ENCODE measurements at regions of chr6 and their contacts with region 1.

Region 1: DNA sequence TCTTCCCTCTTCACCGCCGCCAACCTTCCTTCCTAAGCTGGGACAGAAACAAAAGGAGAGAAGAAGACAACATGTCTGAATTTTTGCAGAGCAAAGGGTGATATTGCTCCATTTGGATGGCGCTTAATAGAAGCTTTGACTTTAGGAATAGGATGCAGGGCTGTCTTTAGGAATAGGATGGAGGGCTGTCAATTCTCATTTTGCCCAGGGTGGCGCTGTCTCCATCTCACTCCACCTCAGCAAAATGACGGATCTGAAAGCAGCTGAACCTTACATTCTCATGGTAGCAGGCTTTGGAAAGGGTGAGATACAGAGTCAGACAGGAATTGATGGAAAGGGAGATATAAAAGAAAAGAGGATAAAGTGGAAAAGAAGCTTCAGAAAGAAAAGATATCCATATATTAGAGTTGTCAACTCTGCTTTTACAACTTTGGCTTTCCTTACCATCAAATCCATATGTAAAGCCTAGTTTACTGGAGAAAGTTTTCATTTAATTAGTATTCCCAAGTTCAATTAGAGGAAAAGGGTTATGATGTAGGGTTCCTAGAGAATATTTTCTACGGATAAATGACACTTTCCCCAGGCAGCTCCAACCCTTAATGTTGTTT is 2.4 kb downstream of the MTCL3 start:
- DNase-seq: peak; percentile 60
- H3K4me3 Mint-ChIP-seq: peak overlapping the region; percentile 80
- H3K27ac Mint-ChIP-seq: peak overlapping the region; percentile 72
- H3K4me1 Mint-ChIP-seq: peaks cover 47% of the 10 kb centered on the region
- H3K27me3 Mint-ChIP-seq: peaks cover 54% of the 10 kb centered on the region

Region 2: DNA sequence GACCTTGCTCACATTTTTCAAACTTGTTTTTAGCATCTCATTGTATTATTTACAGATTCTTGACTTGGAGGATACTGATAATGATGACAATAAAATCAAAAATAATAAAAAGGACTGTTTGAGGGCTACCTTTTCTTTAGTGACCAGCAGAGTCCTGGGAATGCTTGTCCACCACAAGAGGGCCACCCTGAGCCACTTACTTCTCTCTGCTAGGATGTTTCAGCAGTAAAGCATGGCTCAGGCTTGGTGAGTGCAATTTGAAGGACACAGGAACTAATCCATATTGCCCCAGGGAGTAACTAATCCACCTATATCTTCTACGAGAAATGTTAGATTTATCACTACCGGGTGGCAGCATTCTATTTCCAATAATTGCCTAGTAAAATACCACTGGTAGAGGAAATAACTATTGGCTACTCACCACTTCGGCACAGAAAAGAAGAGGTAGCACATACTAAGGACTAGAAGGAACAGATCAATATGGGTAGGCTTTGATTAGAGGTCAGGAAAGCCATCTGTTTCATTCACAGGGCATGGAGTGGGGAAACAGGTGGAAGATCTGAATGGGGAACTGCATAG is 51.8 kb before region 1 on chr6:
- CTCF ChIA-PET with region 1: interaction called, 31 read pairs
- DNase-seq: peak; percentile 77
- H3K4me3 Mint-ChIP-seq: no peak overlapping the region
- H3K27ac Mint-ChIP-seq: no peak overlapping the region
- H3K4me1 Mint-ChIP-seq: peaks cover 13% of the 10 kb centered on the region
- H3K27me3 Mint-ChIP-seq: no peaks in the 10 kb centered on the region

Region 3: DNA sequence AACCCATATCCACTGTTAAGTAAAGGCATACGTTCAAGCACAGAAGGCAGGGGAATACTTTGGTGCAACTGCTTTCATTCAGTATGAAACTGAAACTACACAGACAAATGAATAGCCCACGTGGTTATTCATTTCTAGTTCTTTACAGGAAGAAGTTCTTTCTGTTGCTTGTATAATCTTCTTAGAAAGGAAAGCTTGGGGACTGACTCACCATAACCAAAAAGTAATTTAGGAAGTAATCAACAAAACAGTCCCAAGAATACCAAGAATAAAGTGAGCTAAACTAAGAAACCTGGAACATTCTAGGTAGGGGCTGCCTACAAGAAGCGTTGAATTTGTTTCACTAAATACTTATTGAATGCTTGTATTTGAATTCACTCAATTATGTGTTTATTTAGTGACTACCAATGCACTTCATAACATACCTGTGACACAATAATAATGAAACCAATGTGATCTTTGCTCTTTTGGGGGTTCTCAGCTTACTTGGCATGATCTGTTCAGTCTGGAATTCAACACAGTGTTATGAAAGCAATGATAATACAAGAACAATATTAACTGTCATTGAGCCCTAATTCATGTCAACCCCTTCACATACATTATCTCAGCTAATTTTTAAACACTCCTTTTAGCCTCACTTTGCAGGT is 32.4 kb before region 1 on chr6:
- CTCF ChIA-PET with region 1: interaction called, 47 read pairs
- DNase-seq: no peak
- H3K4me3 Mint-ChIP-seq: peak overlapping the region; percentile 46
- H3K27ac Mint-ChIP-seq: peak overlapping the region; percentile 91
- H3K4me1 Mint-ChIP-seq: peaks cover 37% of the 10 kb centered on the region
- H3K27me3 Mint-ChIP-seq: no peaks in the 10 kb centered on the region

Region 4: GRCh38 chr6:127496471-127496870 is 20.3 kb before region 1 on chr6:
- CTCF ChIA-PET with region 1: interaction called, 38 read pairs
- DNase-seq: no peak
- H3K4me3 Mint-ChIP-seq: no peak overlapping the region
- H3K27ac Mint-ChIP-seq: no peak overlapping the region
- H3K4me1 Mint-ChIP-seq: peaks cover 9% of the 10 kb centered on the region
- H3K27me3 Mint-ChIP-seq: no peaks in the 10 kb centered on the region

Region 5: DNA sequence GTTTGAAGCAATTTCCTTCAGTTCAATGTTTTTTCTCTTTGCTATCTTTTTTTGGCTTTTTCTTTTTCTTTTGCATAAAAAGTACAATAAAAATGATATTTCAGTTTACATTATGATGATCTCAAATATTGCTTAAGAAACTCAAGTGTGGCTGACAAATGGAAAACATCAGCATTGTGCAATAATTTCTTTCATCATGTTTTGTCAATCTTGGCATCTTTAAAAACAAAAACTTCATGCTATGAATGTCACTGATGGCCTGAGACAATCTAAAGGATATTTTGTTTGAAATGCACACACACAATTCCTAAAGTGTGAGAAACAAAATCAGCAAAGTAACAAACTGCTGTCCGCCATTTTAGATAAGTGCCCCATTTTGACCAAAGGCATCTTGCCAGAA is 16.2 kb after region 1 on chr6:
- CTCF ChIA-PET with region 1: interaction called, 60 read pairs
- DNase-seq: no peak
- H3K4me3 Mint-ChIP-seq: no peak overlapping the region
- H3K27ac Mint-ChIP-seq: no peak overlapping the region
- H3K4me1 Mint-ChIP-seq: no peaks in the 10 kb centered on the region
- H3K27me3 Mint-ChIP-seq: peaks cover 25% of the 10 kb centered on the region

Region 6: GRCh38 chr6:127539272-127539671 is 22.5 kb after region 1 on chr6:
- CTCF ChIA-PET with region 1: interaction called, 60 read pairs
- DNase-seq: no peak
- H3K4me3 Mint-ChIP-seq: no peak overlapping the region
- H3K27ac Mint-ChIP-seq: no peak overlapping the region
- H3K4me1 Mint-ChIP-seq: peaks cover 7% of the 10 kb centered on the region
- H3K27me3 Mint-ChIP-seq: peaks cover 23% of the 10 kb centered on the region

Region 7: DNA sequence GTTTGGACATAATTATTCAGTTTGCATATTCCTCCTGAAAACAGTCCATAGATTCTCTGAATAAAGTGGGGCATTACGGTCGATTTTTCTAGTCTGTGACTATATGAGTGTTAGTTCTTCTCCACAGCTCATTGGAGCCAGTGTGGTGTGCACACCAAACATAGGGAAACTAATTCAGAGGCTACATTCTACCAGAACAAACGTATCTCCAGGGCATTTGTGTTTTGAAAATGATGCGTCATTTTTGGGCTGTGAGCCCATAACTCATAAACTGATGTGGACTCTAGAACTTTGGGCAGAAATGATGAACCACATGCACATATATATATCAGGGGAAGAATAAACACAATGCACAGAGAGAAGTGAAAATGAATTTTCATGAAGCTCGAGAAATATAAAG is 102.0 kb after region 1 on chr6:
- CTCF ChIA-PET with region 1: no interaction called
- DNase-seq: no peak
- H3K4me3 Mint-ChIP-seq: no peak overlapping the region
- H3K27ac Mint-ChIP-seq: no peak overlapping the region
- H3K4me1 Mint-ChIP-seq: no peaks in the 10 kb centered on the region
- H3K27me3 Mint-ChIP-seq: no peaks in the 10 kb centered on the region

Measured in activated naive CD4-positive, alpha-beta T cell treated with anti-CD3 and anti-CD28 coated beads, Interleukin-2, amount 10 ng/mL, durations not matched to agents 7 days and 5 days (primary cell).